Naive thymus-derived CD4-positive, alpha-beta T cell (primary cell): ENCODE measurements at regions of chr17 and their contacts with region 1.

Region 1: GRCh38 chr17:8109661-8110464 is 8.5 kb downstream of the ALOXE3 start:
- DNase-seq: peak; percentile 74 to 94 (median 84)
- ATAC-seq: peak; percentile 98
- H3K4me3 ChIP-seq: peak overlapping the region; percentile 73
- H3K4me3 Mint-ChIP-seq: peak overlapping the region; percentile 43 to 81 (median 70)
- H3K27ac ChIP-seq: peak overlapping the region; percentile 42
- H3K27ac Mint-ChIP-seq: peak overlapping the region in 1 of 9 donors; percentile 68
- H3K4me1 ChIP-seq: peaks cover 0 to 4% of the 10 kb centered on the region in 2 donors
- H3K4me1 Mint-ChIP-seq: peaks cover 0 to 8% (median 5%) of the 10 kb centered on the region in 7 donors
- H3K27me3 ChIP-seq: peaks cover 0 to 7% of the 10 kb centered on the region in 2 donors
- H3K27me3 Mint-ChIP-seq: peaks cover 10 to 43% (median 23%) of the 10 kb centered on the region in 5 donors

Region 2: GRCh38 chr17:8073627-8074484 is 36.0 kb before region 1 on chr17:
- CTCF ChIA-PET with region 1: interaction called, 36 read pairs
- POLR2A ChIA-PET with region 1: interaction called, 15 read pairs
- intact Hi-C with region 1: loop called in 1 of 2 experiments (anchors 1 kb)
- DNase-seq: peak; percentile 64 to 86 (median 82)
- ATAC-seq: peak; percentile 91
- H3K4me3 ChIP-seq: peak overlapping the region; percentile 49
- H3K4me3 Mint-ChIP-seq: peak overlapping the region; percentile 84 to 95 (median 88)
- H3K27ac ChIP-seq: no peak overlapping the region
- H3K27ac Mint-ChIP-seq: peak overlapping the region in 7 of 9 donors; percentile 28 to 88 (median 53)
- H3K4me1 ChIP-seq: peaks cover 7 to 24% of the 10 kb centered on the region in 2 donors
- H3K4me1 Mint-ChIP-seq: peaks cover 7 to 28% (median 25%) of the 10 kb centered on the region in 7 donors
- H3K27me3 ChIP-seq: peaks cover 7 to 9% of the 10 kb centered on the region in 2 donors
- H3K27me3 Mint-ChIP-seq: peaks cover 20 to 61% (median 29%) of the 10 kb centered on the region in 5 donors

Region 3: DNA sequence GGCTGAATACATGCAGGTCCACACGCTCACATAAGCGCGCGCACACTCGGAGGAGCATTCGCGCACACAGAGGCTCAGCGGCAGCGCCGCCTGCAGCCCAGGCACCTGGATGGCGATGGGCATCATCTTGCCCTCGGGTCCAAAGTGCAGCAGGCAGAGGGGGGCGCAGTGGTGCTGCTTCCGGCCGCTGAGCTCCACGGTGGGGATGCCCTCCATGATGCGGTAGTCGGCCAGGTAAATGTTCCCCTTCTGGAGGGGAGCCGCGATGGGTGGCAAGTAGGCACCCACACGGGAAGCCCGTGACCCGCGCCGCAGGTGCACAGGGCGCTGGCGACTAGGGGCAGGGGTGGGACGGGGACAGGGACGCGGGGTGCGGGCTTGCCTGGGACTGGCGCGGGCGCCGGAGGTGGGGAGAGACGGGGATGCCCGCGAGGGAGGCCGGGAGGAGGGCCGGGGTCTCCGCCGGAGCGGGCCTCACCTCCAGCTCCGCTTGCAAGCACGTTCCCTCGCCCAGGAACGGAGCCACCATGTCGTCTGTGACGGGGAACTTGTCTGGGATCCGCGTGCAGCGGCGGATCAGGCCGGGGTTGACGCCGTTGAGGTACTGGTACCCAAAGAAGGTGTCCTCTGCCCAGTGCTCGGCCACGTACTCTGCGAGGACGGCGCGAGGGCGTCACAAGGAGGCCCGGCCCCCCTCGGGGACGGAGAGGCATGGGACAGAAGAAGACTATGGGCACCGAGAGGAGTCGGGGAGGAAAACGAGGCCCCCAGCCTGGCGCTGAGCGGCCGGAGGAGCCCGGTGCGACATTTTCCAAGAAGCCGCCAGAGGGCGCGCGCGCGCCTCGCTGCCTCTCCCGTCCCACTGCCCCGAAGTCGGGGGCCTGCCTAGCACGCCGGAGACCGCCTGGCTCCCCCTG is 30.3 kb before region 1 on chr17:
- CTCF ChIA-PET with region 1: interaction called, 248 read pairs
- POLR2A ChIA-PET with region 1: interaction called, 15 read pairs
- intact Hi-C with region 1: loop called (anchors 1 kb)
- DNase-seq: peak; percentile 63 to 89 (median 79)
- ATAC-seq: peak; percentile 90
- H3K4me3 ChIP-seq: peak overlapping the region; percentile 62
- H3K4me3 Mint-ChIP-seq: peak overlapping the region; percentile 88 to 93 (median 91)
- H3K27ac ChIP-seq: peak overlapping the region; percentile 62
- H3K27ac Mint-ChIP-seq: peak overlapping the region; percentile 42 to 92 (median 79)
- H3K4me1 ChIP-seq: peaks cover 13 to 14% of the 10 kb centered on the region in 2 donors
- H3K4me1 Mint-ChIP-seq: peaks cover 10 to 21% (median 18%) of the 10 kb centered on the region in 7 donors
- H3K27me3 ChIP-seq: peaks cover 0 to 4% of the 10 kb centered on the region in 2 donors
- H3K27me3 Mint-ChIP-seq: peaks cover 7 to 18% (median 9%) of the 10 kb centered on the region in 5 donors

Region 4: DNA sequence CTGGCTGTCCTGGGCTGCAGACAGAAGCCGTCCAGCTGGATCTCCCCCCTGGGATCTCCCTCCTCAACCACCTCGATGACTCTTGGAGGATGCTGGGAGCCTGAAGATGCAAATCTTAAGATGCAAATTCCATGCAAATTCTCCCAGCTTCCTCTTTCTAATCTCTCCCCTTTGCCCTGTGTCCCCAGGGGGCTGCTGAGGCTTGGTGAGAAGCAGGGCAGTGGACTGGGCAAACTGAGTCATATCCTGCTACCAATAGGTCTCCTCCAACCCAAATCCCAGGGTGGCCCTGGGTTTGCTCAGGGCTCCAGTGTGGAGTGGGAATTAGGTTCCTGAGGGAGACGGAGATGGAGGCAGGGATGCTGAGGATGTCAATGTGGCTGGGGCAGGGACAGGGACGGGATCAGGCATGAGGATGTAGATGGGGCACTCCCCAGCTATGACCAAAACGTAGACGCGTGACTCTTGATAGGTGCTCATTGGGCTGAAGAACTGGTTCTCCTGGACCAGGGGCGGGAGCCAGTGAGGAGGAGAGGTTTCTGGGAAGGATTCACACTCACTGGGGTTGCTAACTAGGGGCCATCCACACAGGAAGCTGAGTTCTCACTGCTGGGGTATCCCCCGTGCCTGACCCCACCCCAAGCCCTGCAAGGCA is 18.7 kb before region 1 on chr17:
- CTCF ChIA-PET with region 1: interaction called, 248 read pairs
- POLR2A ChIA-PET with region 1: interaction called, 8 read pairs
- intact Hi-C with region 1: loop called (anchors 1 to 2 kb)
- DNase-seq: no peak
- ATAC-seq: no peak
- H3K4me3 ChIP-seq: no peak overlapping the region
- H3K4me3 Mint-ChIP-seq: no peak overlapping the region
- H3K27ac ChIP-seq: no peak overlapping the region
- H3K27ac Mint-ChIP-seq: no peak overlapping the region
- H3K4me1 ChIP-seq: peaks cover 5 to 13% of the 10 kb centered on the region in 2 donors
- H3K4me1 Mint-ChIP-seq: peaks cover 6 to 17% (median 15%) of the 10 kb centered on the region in 7 donors
- H3K27me3 ChIP-seq: peaks cover 0 to 5% of the 10 kb centered on the region in 2 donors
- H3K27me3 Mint-ChIP-seq: peaks cover 4 to 49% (median 21%) of the 10 kb centered on the region in 5 donors

Region 5: GRCh38 chr17:8125157-8125946 is 15.5 kb after region 1 on chr17:
- CTCF ChIA-PET with region 1: interaction called, 32 read pairs
- POLR2A ChIA-PET with region 1: interaction called, 36 read pairs
- intact Hi-C with region 1: no loop called
- DNase-seq: peak; percentile 82 to 97 (median 87)
- ATAC-seq: peak; percentile 63
- H3K4me3 ChIP-seq: peak overlapping the region; percentile 96
- H3K4me3 Mint-ChIP-seq: peak overlapping the region; percentile 88 to 99 (median 92)
- H3K27ac ChIP-seq: peak overlapping the region; percentile 50
- H3K27ac Mint-ChIP-seq: peak overlapping the region; percentile 80 to 99 (median 94)
- H3K4me1 ChIP-seq: peaks cover 46 to 50% of the 10 kb centered on the region in 2 donors
- H3K4me1 Mint-ChIP-seq: peaks cover 42 to 57% (median 51%) of the 10 kb centered on the region in 7 donors
- H3K27me3 ChIP-seq: peaks cover 0 to 3% of the 10 kb centered on the region in 2 donors
- H3K27me3 Mint-ChIP-seq: peaks cover 0 to 65% (median 27%) of the 10 kb centered on the region in 5 donors